Activated T-helper 2 cell treated with anti-CD3 and anti-CD28 coated beads, Interferon-gamma antibody, Interleukin-2, Interleukin-4, amounts not matched to agents 10 μg/mL and 5 μg/mL and 100 μg/mL, durations not matched to agents 14 hours and 24 hours and 36 hours (primary cell): ENCODE measurements at regions of chr14 and their contacts with region 1.

Region 1: DNA sequence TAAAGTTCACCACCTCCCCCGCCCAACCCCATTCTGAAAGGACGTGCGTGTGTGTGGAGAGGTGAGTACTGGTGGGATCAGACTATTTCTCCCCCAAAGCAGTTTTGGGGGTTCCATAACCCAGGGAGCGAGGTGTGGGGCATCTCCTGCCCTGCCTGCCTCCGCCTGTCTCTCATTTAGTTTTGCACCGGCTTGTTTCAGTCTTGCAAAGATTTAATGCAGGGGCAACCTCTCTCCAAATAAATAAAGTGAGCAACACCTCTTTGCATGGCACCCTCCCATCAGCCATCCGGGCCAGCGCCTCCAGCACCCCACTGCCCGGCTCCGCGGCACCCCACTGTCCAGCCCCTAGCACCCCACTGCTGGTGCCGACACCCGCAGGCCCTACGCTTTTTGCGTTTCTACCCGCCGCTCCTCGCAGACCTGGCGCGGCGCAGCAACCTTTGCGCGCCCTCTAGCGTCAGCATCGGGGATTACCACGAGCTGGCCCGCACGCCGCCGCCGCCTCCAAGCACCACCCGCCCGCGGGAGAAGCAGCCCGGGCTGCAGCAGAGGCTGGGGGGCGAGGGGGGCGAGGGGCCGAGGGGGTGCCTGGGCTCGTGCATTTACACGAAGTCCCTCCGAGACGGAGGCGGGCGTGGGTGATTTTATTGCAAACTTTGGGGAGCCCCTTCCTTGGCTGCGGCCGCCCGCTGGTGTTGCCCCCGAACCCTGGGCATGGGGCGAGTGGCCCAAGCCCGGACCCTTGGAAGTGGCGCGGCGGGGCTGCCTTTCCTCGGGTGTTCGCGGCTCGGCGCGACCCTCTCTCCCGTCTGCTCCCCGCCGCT is 55.8 kb upstream of the VRK1 start:
- DNase-seq: peak; percentile 70
- H3K4me3 Mint-ChIP-seq: peak overlapping the region; percentile 47
- H3K27ac Mint-ChIP-seq: no peak overlapping the region
- H3K4me1 Mint-ChIP-seq: peaks cover 1% of the 10 kb centered on the region
- H3K27me3 Mint-ChIP-seq: peaks cover 66% of the 10 kb centered on the region

Region 2: GRCh38 chr14:96567289-96567899 is 174.0 kb before region 1 on chr14:
- intact Hi-C with region 1: loop called (anchors 5 kb)
- DNase-seq: no peak
- H3K4me3 Mint-ChIP-seq: no peak overlapping the region
- H3K27ac Mint-ChIP-seq: no peak overlapping the region
- H3K4me1 Mint-ChIP-seq: peaks cover 3% of the 10 kb centered on the region
- H3K27me3 Mint-ChIP-seq: no peaks in the 10 kb centered on the region

Region 3: GRCh38 chr14:96592591-96593386 is 148.6 kb before region 1 on chr14:
- intact Hi-C with region 1: loop called (anchors 5 kb)
- DNase-seq: peak; percentile 65
- H3K4me3 Mint-ChIP-seq: peak overlapping the region; percentile 66
- H3K27ac Mint-ChIP-seq: peak overlapping the region; percentile 22
- H3K4me1 Mint-ChIP-seq: peaks cover 6% of the 10 kb centered on the region
- H3K27me3 Mint-ChIP-seq: peaks cover 14% of the 10 kb centered on the region